ENCODE measurements at regions of chr15 and their contacts with region 1.

Region 1: GRCh38 chr15:63628123-63628822 is 31.1 kb downstream of the FBXL22 start:
- DNase-seq: no peak
- H3K27ac ChIP-seq: no peak overlapping the region
- CTCF ChIP-seq: no peak

Region 2: DNA sequence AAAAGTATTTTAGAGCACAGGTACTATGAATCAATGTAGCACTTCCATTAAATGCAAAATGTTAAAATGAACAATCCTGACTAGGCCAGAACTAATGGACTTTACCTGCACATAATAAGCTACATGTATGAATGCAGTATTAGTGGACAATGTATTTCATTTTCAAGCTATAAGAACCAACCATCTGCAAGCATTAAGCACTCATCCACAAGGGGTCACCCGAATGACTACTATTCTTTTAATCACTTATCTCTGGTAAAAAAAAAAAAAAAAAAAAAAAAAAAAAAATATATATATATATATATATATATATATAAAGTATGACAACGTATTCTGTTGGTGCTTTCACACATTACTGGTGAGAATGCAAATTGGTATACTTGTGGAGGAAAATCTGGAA is 198.3 kb after region 1 on chr15:
- CTCF ChIA-PET with region 1: interaction called, 10 read pairs
- POLR2A ChIA-PET with region 1: no interaction called
- DNase-seq: no peak
- H3K27ac ChIP-seq: no peak overlapping the region
- CTCF ChIP-seq: no peak